Endothelial cell of umbilical vein (primary cell): ENCODE measurements at regions of chr5 and their contacts with region 1.

Region 1: GRCh38 chr5:173917788-173918786 is 29.9 kb downstream of the CPEB4 start:
- DNase-seq: peak; percentile 93
- H3K4me3 ChIP-seq: peak overlapping the region; percentile 44 to 93 (median 65)
- H3K27ac ChIP-seq: peak overlapping the region; percentile 99
- H3K4me1 ChIP-seq: peaks cover 28% of the 10 kb centered on the region
- H3K27me3 ChIP-seq: no peaks in the 10 kb centered on the region
- CTCF ChIP-seq: no peak
- POLR2A ChIP-seq: peak; percentile 94

Region 2: DNA sequence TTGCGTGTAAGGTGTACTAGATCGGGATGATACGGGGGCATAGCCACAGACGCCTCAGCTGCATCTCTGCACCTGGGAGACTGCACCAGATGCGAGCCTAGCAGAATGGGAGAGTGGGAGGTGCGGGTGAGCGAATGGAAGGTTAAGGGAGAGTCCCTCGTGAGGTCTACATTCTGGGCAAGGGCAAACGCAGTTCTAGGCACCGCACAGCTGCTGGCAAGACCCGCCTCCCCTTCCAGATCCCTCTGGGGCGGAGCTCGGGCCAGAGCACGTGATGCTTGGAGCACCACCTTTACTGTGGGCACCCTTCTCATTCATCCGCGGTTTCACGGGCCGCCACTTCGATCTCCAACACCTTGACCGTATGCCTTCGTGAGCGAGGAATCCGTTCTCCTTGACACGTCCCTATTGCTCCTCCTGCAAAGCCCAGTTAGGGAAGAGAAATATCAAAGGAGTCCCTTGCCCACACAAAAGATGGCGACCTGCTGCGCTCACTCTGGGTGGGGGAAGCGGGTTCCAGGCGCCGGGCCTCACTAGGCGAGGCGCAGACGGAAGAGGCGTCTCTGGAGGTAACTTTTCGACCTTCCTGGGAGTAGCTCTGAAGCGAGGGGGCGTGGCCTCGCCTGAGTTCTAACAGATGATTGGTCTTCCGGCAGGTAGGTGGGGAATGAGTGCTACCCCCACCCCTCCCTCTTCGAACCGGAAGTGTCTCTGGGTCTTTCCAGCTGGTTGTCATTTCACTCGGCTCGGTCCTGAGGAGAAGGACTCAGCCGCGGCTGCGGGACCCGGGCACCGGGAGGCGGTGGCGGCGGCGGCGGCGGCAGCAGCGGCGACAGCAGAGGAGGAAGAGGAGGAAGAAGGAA is 30.2 kb before region 1 on chr5 and contains the start of gene CPEB4:
- CTCF ChIA-PET with region 1: interaction called, 6 read pairs
- POLR2A ChIA-PET with region 1: interaction called, 7 read pairs
- dilution Hi-C with region 1: no loop called
- intact Hi-C with region 1: loop called (anchors 1 kb)
- DNase-seq: peak; percentile 99
- H3K4me3 ChIP-seq: peak within 1 kb of the TSS; percentile 76 to 84 (median 79)
- H3K27ac ChIP-seq: peak within 1 kb of the TSS; percentile 82
- H3K4me1 ChIP-seq: peaks cover 42% of the 10 kb centered on the region
- H3K27me3 ChIP-seq: no peaks in the 10 kb centered on the region
- CTCF ChIP-seq: no peak
- POLR2A ChIP-seq: peak; percentile 89
- total RNA-seq, gene CPEB4: 16.4 and 18.1 TPM in 2 replicates

Region 3: GRCh38 chr5:174532455-174533453 is 614.7 kb after region 1 on chr5:
- CTCF ChIA-PET with region 1: no interaction called
- POLR2A ChIA-PET with region 1: no interaction called
- dilution Hi-C with region 1: no loop called
- intact Hi-C with region 1: no loop called
- DNase-seq: peak; percentile 42
- H3K4me3 ChIP-seq: no peak overlapping the region
- H3K27ac ChIP-seq: peak overlapping the region; percentile 15
- H3K4me1 ChIP-seq: peaks cover 23% of the 10 kb centered on the region
- H3K27me3 ChIP-seq: no peaks in the 10 kb centered on the region
- CTCF ChIP-seq: no peak
- POLR2A ChIP-seq: no peak